ENCODE measurements at regions of chr3 and their contacts with region 1.

Region 1: GRCh38 chr3:113912552-113913236 is 35.1 kb upstream of the ZDHHC23 start:
- DNase-seq: peak; percentile 58
- CTCF ChIP-seq: peak; percentile 76

Region 2: GRCh38 chr3:112619295-112619694 is 1293.4 kb before region 1 on chr3:
- in situ Hi-C with region 1: no loop called
- DNase-seq: no peak
- CTCF ChIP-seq: no peak

Region 3: GRCh38 chr3:113736548-113737089 is 176.1 kb before region 1 on chr3:
- in situ Hi-C with region 1: loop called (anchors 10 kb)
- DNase-seq: peak; percentile 42
- CTCF ChIP-seq: peak; percentile 61

Region 4: GRCh38 chr3:114285648-114286230 is 373.0 kb after region 1 on chr3:
- in situ Hi-C with region 1: no loop called
- DNase-seq: no peak
- CTCF ChIP-seq: no peak